Panc1 (cell line): ENCODE measurements at regions of chr7 and their contacts with region 1.

Region 1: GRCh38 chr7:19491821-19492452 is 216.9 kb downstream of the POLR1F start:
- DNase-seq: peak; percentile 12
- ATAC-seq: no peak
- H3K4me3 ChIP-seq: no peak overlapping the region
- H3K27ac ChIP-seq: no peak overlapping the region
- H3K4me1 ChIP-seq: no peaks in the 10 kb centered on the region
- H3K27me3 ChIP-seq: no peaks in the 10 kb centered on the region
- CTCF ChIP-seq: peak; percentile 71; the same call in 1 of the 2 replicates

Region 2: DNA sequence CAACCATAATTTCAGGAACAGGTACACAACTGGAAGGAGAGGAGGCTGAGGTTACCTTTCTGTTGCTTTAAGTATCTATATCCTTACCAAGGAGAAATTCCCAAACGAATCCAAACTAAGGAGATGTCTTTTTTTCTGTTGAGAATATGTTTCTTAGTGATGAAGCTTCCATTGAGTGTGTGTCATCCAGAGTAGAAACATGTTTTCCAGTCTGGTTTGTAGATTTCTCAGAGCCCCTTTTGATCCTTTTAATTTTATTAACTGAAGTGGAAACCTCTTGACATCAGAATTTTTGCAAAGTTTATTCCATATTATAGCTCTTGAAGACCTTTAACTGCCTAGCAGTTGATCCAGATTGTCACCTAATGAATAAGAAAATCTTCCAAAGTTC is 139.6 kb before region 1 on chr7:
- CTCF ChIA-PET with region 1: no interaction called
- POLR2A ChIA-PET with region 1: interaction called, 14 read pairs
- in situ Hi-C with region 1: no loop called
- intact Hi-C with region 1: no loop called
- DNase-seq: no peak
- ATAC-seq: no peak
- H3K4me3 ChIP-seq: no peak overlapping the region
- H3K27ac ChIP-seq: no peak overlapping the region
- H3K4me1 ChIP-seq: no peaks in the 10 kb centered on the region
- H3K27me3 ChIP-seq: no peaks in the 10 kb centered on the region
- CTCF ChIP-seq: no peak

Region 3: DNA sequence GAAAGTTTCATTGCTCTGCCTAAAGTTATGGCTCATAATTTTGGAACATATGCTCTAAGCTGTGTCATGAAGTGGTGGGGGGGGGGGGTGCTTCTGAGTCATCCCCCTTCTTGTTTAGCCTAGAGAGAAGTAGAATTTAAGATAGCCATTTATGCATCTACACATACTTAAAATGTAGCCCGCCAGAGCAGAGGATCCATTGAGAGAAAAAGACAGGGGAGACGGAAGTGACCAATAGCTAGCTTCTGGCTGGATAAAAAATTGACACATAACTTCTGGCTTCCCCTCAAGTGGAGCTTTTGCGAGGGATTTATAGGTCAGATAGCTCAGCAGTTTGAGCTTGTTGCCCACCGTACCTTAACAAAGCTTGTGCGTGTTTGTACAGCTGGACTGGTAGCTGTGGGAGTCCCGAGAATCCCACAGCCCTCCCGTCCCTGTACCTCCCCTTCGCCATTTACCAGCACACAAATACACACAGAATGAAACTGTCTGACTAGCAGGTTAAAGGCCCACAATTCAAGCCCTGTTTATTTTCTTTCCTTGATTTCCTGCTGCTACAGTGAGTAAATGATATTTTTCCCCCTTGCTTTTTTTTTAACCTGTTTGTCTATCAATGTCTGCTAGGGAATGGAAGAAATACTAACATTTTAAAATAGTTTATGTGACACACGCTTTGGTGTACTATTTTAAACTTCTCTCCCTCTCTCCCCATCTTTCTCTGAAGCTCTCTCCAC is 114.2 kb before region 1 on chr7:
- CTCF ChIA-PET with region 1: no interaction called
- POLR2A ChIA-PET with region 1: no interaction called
- in situ Hi-C with region 1: no loop called
- intact Hi-C with region 1: no loop called
- DNase-seq: no peak
- ATAC-seq: peak; percentile 83
- H3K4me3 ChIP-seq: peak overlapping the region in 1 of 2 experiments; percentile 32; a peak in 2 of 4 replicates
- H3K27ac ChIP-seq: peak overlapping the region; percentile 86
- H3K4me1 ChIP-seq: no peaks in the 10 kb centered on the region; the same call in 1 of the 2 replicates
- H3K27me3 ChIP-seq: no peaks in the 10 kb centered on the region
- CTCF ChIP-seq: no peak

Region 4: DNA sequence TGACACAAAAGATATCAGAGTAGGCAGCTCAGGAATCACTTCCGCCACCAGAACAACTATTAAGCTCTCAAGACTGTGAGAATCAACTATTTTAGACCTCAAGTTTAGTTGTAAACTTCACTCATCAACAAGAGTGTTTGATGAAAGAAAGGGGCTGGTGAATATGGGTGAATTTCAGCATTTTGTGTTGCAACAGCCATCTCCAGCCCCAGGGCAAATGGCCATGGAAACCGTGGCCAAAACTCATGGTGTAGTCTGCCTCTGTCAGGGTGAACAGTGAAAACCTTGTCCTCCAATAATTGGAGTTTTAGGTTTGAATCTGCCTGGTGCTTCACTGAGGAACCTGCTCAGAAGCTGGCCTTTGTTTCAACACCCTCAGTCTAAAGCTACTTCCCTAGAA is 156.9 kb after region 1 on chr7:
- CTCF ChIA-PET with region 1: interaction called, 12 read pairs
- POLR2A ChIA-PET with region 1: no interaction called
- in situ Hi-C with region 1: no loop called
- intact Hi-C with region 1: no loop called
- DNase-seq: no peak
- ATAC-seq: no peak
- H3K4me3 ChIP-seq: no peak overlapping the region
- H3K27ac ChIP-seq: no peak overlapping the region
- H3K4me1 ChIP-seq: no peaks in the 10 kb centered on the region
- H3K27me3 ChIP-seq: no peaks in the 10 kb centered on the region
- CTCF ChIP-seq: no peak

Region 5: GRCh38 chr7:19814776-19815175 is 322.8 kb after region 1 on chr7:
- CTCF ChIA-PET with region 1: interaction called, 10 read pairs
- POLR2A ChIA-PET with region 1: no interaction called
- in situ Hi-C with region 1: no loop called
- intact Hi-C with region 1: no loop called
- DNase-seq: no peak
- ATAC-seq: no peak
- H3K4me3 ChIP-seq: no peak overlapping the region
- H3K27ac ChIP-seq: no peak overlapping the region
- H3K4me1 ChIP-seq: no peaks in the 10 kb centered on the region
- H3K27me3 ChIP-seq: no peaks in the 10 kb centered on the region
- CTCF ChIP-seq: no peak